Common myeloid progenitor, CD34-positive (primary cell): ENCODE measurements at regions of chr16 and their contacts with region 1.

Region 1: GRCh38 chr16:27188633-27189032 is 14.7 kb upstream of the KDM8 start:
- DNase-seq: no peak
- H3K4me3 ChIP-seq: no peak overlapping the region
- H3K27ac ChIP-seq: no peak overlapping the region
- H3K4me1 ChIP-seq: no peaks in the 10 kb centered on the region
- H3K27me3 ChIP-seq: no peaks in the 10 kb centered on the region

Region 2: GRCh38 chr16:27203429-27204231 is 15.0 kb after region 1 on chr16 and contains the start of gene KDM8:
- CTCF ChIA-PET with region 1: interaction called, 18 read pairs
- POLR2A ChIA-PET with region 1: interaction called, 3 read pairs
- DNase-seq: peak; percentile 99 to 100 (median 100)
- H3K4me3 ChIP-seq: peak within 1 kb of the TSS; percentile 84 to 97 (median 91)
- H3K27ac ChIP-seq: peak within 1 kb of the TSS; percentile 95 to 97
- H3K4me1 ChIP-seq: peaks cover 20 to 29% (median 25%) of the 10 kb centered on the region in 4 experiments
- H3K27me3 ChIP-seq: no peaks in the 10 kb centered on the region